Lower leg skin (tissue), 4 donors: ENCODE measurements at regions of chr1 and their contacts with region 1.

Region 1: GRCh38 chr1:27097484-27097917 is 57.4 kb downstream of the SLC9A1 start:
- DNase-seq: peak; percentile 78 to 96
- H3K4me3 ChIP-seq: no peak overlapping the region
- CTCF ChIP-seq: peak in 1 of 3 donors; percentile 74
- POLR2A ChIP-seq: no peak

Region 2: GRCh38 chr1:26959722-26960615 is 137.5 kb before region 1 on chr1 and contains the start of gene KDF1:
- intact Hi-C with region 1: loop called (anchors 10 kb)
- DNase-seq: peak; percentile 46 to 89
- H3K4me3 ChIP-seq: peak within 1 kb of the TSS; percentile 47
- CTCF ChIP-seq: no peak
- POLR2A ChIP-seq: no peak
- total RNA-seq, gene KDF1: 34.0 to 45.8 (median 36.2) TPM

Region 3: GRCh38 chr1:26999440-26999987 is 98.0 kb before region 1 on chr1:
- intact Hi-C with region 1: no loop called
- DNase-seq: peak in 1 of 2 donors; percentile 79
- H3K4me3 ChIP-seq: no peak overlapping the region
- CTCF ChIP-seq: no peak
- POLR2A ChIP-seq: no peak

Region 4: GRCh38 chr1:27026621-27027574 is 70.6 kb before region 1 on chr1:
- intact Hi-C with region 1: no loop called
- DNase-seq: peak; percentile 79 to 91
- H3K4me3 ChIP-seq: no peak overlapping the region
- CTCF ChIP-seq: no peak
- POLR2A ChIP-seq: no peak

Region 5: DNA sequence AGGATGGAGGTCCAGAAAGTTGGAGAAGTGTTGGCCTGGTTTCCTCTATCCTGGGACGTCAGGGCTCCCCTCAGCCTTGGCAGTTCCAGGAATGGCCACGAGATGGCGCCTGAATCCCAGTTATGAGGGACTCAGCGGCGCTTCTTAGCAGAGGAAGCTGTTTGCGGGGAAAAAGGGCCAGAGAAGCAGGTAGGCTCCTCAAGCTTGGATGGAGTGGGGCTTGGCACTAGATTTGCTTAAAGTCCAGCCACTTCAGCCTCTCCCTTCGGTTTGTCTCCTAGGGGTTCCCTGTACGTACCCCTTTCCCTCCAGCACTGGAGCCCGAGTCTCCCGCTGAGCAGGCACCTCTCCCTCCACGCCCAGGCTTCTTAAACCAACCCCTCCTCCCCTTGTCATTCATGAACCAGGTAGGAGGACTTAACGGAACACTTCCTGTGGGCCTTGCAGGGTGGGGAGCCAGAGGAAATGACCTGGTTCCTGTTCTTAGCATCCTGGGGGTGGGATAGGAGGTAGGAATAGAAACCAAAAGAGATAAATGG is 52.8 kb before region 1 on chr1:
- intact Hi-C with region 1: loop called (anchors 2 kb)
- DNase-seq: peak; percentile 87 to 98
- H3K4me3 ChIP-seq: no peak overlapping the region
- CTCF ChIP-seq: peak in 2 of 3 donors; percentile 46 to 94
- POLR2A ChIP-seq: no peak

Region 6: DNA sequence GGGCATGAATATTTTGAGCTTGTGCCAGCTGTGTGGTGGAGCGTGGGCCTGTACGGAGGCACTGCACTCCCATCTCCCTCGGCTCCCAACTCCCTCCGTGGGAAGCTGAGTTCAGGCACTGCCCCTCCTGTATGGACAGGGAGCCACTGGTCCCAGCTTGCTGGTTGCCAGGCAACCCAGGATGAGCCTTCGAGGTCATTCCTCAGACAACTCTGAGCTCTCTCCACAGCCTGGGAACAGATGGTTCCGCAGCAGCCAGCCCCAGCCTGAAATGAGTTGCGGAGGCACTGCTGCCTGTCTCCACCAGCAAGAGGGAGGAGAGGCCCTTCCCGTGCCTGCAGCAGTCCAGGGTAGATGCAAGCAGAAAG is 26.5 kb before region 1 on chr1:
- intact Hi-C with region 1: no loop called
- DNase-seq: peak in 1 of 2 donors; percentile 33
- H3K4me3 ChIP-seq: no peak overlapping the region
- CTCF ChIP-seq: no peak
- POLR2A ChIP-seq: no peak